ENCODE measurements at regions of chr13 and their contacts with region 1.

Region 1: DNA sequence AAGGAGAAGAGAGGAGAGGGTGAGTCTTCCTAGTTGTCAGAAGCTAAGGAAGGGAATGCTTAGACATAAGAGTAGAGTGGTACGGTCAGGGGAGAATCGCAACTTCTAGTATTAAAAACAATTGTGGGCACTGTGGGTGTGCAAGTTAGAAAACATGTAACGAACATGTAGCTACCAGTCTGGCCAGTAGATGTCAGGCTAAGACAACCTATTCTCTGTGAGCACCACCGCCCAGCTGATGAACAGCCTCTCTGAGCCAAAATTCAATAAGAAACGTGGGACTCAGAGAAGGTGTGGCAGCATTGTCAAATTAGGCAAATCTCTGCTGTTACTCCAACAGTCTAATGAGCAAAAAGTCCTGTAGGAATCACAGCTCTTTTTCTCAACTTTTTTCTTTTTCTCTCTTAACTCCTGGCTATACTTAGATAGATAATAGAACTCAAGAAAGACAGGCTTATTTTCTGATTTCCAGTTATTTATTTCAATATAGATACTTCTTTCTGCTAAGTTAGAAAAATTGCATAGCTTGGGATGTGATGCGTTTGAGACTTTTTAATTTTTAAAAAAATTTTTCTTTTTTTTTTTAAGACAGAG is 186.2 kb downstream of the USP12 start:
- DNase-seq: no peak
- ATAC-seq: peak; percentile 96
- H3K4me3 Mint-ChIP-seq: no peak overlapping the region
- H3K27ac Mint-ChIP-seq: no peak overlapping the region
- H3K4me1 Mint-ChIP-seq: peaks cover 5% of the 10 kb centered on the region
- H3K27me3 Mint-ChIP-seq: peaks cover 6% of the 10 kb centered on the region
- CTCF ChIP-seq: no peak

Region 2: GRCh38 chr13:26946684-26947343 is 38.6 kb before region 1 on chr13:
- CTCF ChIA-PET with region 1: interaction called, 11 read pairs
- POLR2A ChIA-PET with region 1: no interaction called
- intact Hi-C with region 1: no loop called
- DNase-seq: no peak
- ATAC-seq: peak; percentile 58
- H3K4me3 Mint-ChIP-seq: no peak overlapping the region
- H3K27ac Mint-ChIP-seq: no peak overlapping the region
- H3K4me1 Mint-ChIP-seq: no peaks in the 10 kb centered on the region
- H3K27me3 Mint-ChIP-seq: peaks cover 5% of the 10 kb centered on the region
- CTCF ChIP-seq: no peak

Region 3: DNA sequence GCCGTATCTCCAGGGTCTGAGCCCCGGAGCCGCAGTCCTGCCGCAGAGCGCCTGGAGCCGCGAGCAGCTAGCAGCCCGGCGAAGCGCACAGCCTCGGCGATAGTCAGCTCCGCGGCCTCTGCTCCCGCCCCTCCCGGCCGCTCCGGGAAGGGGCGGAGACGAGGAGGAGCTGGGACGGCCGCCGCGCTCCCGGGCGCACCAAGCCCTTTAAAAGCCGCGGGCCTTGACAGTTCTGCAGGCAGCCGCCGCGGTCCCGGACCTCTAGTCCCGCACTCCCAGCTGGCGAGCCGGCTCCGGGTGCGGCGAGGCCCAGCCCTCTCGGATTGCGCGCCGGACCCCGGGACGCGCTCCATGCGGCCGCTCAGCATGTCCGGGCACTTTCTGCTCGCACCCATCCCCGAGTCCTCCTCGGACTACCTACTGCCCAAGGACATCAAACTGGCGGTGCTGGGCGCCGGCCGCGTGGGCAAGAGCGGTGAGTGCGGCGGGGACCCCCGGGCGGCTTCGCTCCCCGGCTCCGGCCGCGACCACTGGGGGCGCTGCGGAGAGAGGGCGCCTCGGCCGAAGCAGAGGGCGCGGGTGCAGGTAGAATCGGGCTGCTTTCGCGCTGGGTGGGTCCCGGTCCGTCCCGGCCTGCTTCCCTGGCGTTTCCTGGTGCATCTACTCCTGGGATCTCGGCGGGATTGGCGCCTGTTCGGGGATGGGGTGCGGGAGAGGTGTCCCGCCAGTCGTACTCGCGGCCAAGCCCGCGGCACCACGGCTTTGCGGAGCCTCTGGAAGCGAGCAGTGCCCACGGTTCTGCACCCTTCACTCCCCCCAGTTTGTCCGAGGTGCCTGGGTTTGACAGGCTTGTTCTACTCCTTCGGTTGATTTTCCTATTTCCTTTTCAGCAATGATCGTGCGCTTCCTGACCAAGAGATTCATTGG is 285.5 kb after region 1 on chr13 and contains the start of gene RASL11A:
- CTCF ChIA-PET with region 1: interaction called, 15 read pairs
- POLR2A ChIA-PET with region 1: interaction called, 5 read pairs
- intact Hi-C with region 1: loop called (anchors 1 kb)
- DNase-seq: peak; percentile 85
- ATAC-seq: peak; percentile 91
- H3K4me3 Mint-ChIP-seq: peak within 1 kb of the TSS; percentile 90
- H3K27ac Mint-ChIP-seq: peak within 1 kb of the TSS; percentile 14
- H3K4me1 Mint-ChIP-seq: peaks cover 28% of the 10 kb centered on the region
- H3K27me3 Mint-ChIP-seq: no peaks in the 10 kb centered on the region
- CTCF ChIP-seq: peak; percentile 99
- total RNA-seq, gene RASL11A: 1.4 and 2.0 TPM in 2 replicates

Region 4: DNA sequence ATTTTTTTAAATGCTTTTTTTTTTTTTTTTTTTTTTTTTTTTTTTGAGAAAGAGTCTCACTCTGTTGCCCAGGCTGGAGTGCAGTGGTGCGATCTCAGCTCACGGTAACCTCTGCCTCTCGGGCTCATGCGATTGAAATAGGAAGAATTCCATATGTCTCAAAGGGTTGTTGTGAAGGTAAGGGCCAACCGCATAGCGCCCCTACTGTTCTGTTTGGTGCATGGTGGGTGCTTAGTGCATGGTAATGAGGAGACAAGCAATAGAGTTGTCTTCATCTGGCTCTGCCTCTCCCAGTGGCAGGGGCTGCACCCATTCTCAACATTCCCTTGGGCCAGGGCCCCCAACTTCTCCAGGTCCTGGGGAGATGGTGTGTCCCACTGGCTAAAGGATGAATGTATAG is 353.9 kb after region 1 on chr13:
- CTCF ChIA-PET with region 1: interaction called, 17 read pairs
- POLR2A ChIA-PET with region 1: no interaction called
- intact Hi-C with region 1: loop called (anchors 1 kb)
- DNase-seq: no peak
- ATAC-seq: peak; percentile 71
- H3K4me3 Mint-ChIP-seq: no peak overlapping the region
- H3K27ac Mint-ChIP-seq: no peak overlapping the region
- H3K4me1 Mint-ChIP-seq: peaks cover 3% of the 10 kb centered on the region
- H3K27me3 Mint-ChIP-seq: peaks cover 4% of the 10 kb centered on the region
- CTCF ChIP-seq: no peak

Region 5: GRCh38 chr13:27362064-27362883 is 376.9 kb after region 1 on chr13:
- CTCF ChIA-PET with region 1: interaction called, 185 read pairs
- POLR2A ChIA-PET with region 1: interaction called, 3 read pairs
- intact Hi-C with region 1: loop called (anchors 1 kb)
- DNase-seq: peak; percentile 73
- ATAC-seq: peak; percentile 92
- H3K4me3 Mint-ChIP-seq: peak overlapping the region; percentile 35
- H3K27ac Mint-ChIP-seq: no peak overlapping the region
- H3K4me1 Mint-ChIP-seq: peaks cover 9% of the 10 kb centered on the region
- H3K27me3 Mint-ChIP-seq: peaks cover 11% of the 10 kb centered on the region
- CTCF ChIP-seq: peak; percentile 65

Region 6: GRCh38 chr13:27977476-27978300 is 992.3 kb after region 1 on chr13:
- CTCF ChIA-PET with region 1: interaction called, 13 read pairs
- POLR2A ChIA-PET with region 1: no interaction called
- intact Hi-C with region 1: no loop called
- DNase-seq: no peak
- ATAC-seq: no peak
- H3K4me3 Mint-ChIP-seq: no peak overlapping the region
- H3K27ac Mint-ChIP-seq: no peak overlapping the region
- H3K4me1 Mint-ChIP-seq: peaks cover 36% of the 10 kb centered on the region
- H3K27me3 Mint-ChIP-seq: peaks cover 79% of the 10 kb centered on the region
- CTCF ChIP-seq: no peak

Measured in activated B cell treated with CpG ODN at 0.5 μM for 24 hours (primary cell).